ENCODE measurements at regions of chr4 and their contacts with region 1.

Region 1: DNA sequence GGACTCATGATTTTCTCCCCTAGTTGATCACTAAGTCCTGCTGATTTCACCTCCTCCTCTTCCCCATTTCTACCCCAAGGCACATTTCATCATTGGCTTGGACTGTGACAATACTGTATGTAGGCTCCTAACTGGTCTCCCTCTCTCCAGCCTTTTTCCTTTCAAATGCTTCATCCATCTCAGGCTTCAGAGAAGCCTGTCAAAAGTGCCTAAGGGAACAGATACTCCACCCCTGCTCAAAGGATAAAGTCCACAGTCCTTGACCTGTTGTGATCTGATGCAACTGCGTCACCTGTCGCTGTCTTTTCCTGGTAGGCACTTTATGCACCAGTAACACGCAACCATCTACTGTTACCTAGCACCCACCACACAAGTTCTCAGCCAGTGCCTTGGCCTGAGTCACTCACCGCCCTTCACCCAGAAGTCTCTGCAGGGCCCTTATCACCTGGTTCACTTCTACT is 12.8 kb downstream of the SCARB2 start:
- DNase-seq: peak; percentile 77
- ATAC-seq: peak; percentile 95
- H3K4me3 ChIP-seq: no peak overlapping the region
- H3K27ac ChIP-seq: peak overlapping the region; percentile 66
- H3K4me1 ChIP-seq: peaks cover 47% of the 10 kb centered on the region
- H3K27me3 ChIP-seq: no peaks in the 10 kb centered on the region
- CTCF ChIP-seq: no peak
- EP300 ChIP-seq: peak; percentile 56 to 83; a peak in 3 of 4 replicates
- POLR2A ChIP-seq: no peak
- RAD21 ChIP-seq: no peak

Region 2: DNA sequence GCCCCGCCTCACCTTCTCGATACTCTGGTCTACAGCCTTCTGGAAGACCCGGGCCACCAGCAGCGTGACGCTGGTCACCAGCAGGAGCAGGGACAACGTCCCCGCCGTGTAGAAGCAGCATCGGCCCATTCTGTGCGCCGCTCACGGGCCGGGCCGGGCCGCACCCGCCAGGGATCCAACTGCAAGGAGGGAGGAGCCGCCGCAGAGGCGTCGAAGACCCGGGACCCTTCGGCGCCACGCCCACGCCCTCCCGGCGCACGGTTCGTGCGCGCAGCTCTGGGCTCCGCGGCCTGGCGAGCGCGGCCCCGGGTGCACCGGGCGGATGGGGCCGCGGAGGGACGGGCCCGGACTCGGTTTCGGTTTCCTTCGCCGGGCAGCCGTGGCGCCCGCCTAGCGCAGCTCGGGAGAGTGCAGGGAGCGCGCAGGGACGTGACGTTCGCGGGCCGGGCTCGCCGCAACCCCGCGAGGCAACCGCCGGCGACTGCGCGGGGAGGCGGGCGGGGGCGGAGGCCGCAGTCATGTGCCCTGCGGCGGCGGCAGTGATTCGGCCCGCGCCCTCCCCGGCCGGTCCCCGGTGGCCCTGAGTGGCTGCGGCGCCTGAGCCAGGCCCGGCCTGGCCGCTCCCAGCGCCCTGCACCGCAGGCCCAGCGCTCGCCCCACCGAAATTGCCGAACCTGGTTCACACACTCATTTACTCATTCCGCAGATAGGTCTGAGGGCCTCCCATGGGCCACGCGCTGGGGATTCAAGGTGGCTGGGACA is 12.8 kb after region 1 on chr4 and contains the start of gene SCARB2:
- CTCF ChIA-PET with region 1: no interaction called
- POLR2A ChIA-PET with region 1: interaction called, 3 read pairs
- in situ Hi-C with region 1: no loop called
- intact Hi-C with region 1: loop called (anchors 1 kb)
- DNase-seq: peak; percentile 61
- ATAC-seq: peak; percentile 96
- H3K4me3 ChIP-seq: peak within 1 kb of the TSS; percentile 72 to 86 (median 76)
- H3K27ac ChIP-seq: peak within 1 kb of the TSS; percentile 86
- H3K4me1 ChIP-seq: peaks cover 69% of the 10 kb centered on the region
- H3K27me3 ChIP-seq: no peaks in the 10 kb centered on the region; a peak in 1 of 5 replicates
- CTCF ChIP-seq: no peak
- EP300 ChIP-seq: no peak; a peak in 1 of 4 replicates
- POLR2A ChIP-seq: peak in 1 of 2 experiments; percentile 84; a peak in 2 of 4 replicates
- RAD21 ChIP-seq: peak; percentile 54
- total RNA-seq, gene SCARB2: 23.5 and 43.4 TPM in 2 replicates

Region 3: GRCh38 chr4:76301068-76301774 is 100.4 kb after region 1 on chr4:
- CTCF ChIA-PET with region 1: no interaction called
- POLR2A ChIA-PET with region 1: no interaction called
- in situ Hi-C with region 1: no loop called
- intact Hi-C with region 1: no loop called
- DNase-seq: peak; percentile 91
- ATAC-seq: peak; percentile 77
- H3K4me3 ChIP-seq: peak overlapping the region in 2 of 3 experiments; percentile 7 to 17; a peak in 1 of 6 replicates
- H3K27ac ChIP-seq: peak overlapping the region; percentile 59
- H3K4me1 ChIP-seq: peaks cover 40% of the 10 kb centered on the region
- H3K27me3 ChIP-seq: no peaks in the 10 kb centered on the region
- CTCF ChIP-seq: no peak
- EP300 ChIP-seq: peak in 1 of 2 experiments; percentile 66; a peak in 2 of 4 replicates
- POLR2A ChIP-seq: no peak
- RAD21 ChIP-seq: no peak

Measured in HepG2 (cell line).